Astrocyte of the cerebellum (primary cell): ENCODE measurements at regions of chr15 and their contacts with region 1.

Region 1: DNA sequence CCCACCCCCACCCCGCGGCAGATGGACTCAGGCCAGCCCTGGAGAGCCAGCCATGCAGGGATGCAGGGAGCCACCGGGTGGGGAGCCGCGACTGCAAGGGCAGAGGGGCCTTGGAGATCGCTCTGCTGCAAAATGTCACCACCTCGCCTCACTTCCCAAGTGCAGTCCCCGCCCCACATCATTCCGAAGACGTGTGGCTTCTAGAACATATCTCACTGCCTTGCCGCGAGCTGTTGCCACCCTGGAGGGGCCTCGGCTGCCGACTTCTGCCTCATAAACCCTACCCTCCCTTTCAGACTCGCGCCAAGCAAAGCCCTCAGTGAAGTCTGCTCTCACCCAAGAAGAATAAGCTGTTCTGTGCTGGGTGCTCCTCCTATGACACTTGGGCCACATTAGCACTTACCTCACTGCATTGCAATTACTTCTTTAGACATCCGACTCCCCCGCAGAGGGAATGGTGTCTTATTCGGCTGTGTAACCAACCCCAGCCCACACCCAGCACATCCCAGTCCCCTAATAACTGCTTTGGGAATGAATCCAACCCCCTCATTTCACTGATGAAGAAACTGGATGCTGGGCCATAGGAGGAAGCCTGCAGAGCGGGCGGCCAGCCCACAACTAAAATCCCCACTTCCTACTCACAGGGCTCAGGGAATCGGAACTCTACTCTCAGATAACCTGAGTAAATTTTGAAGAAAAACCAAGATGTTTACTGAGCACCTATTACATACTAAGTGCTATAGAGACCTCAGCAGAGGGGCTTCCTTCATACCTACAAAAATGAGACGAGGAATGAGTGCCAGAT is 8.6 kb downstream of the TLE3 start:
- DNase-seq: no peak
- H3K4me3 ChIP-seq: no peak overlapping the region
- CTCF ChIP-seq: no peak

Region 2: DNA sequence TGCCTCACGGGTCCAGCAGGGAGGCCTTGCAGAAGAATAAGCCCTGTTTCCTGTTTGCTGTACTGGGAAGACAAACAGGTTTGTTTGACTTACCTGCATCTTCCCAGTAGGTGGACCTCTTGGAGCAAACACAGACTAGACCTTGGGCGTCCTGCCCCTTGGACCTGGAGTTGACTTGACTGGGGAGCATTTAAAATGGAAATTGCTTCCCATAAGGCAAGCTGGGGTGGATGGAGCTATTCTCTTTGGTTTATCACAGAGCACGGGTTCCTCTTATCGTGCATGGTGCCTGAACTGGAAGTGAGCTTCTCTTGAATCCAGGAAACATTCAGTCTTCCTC is 485.0 kb before region 1 on chr15:
- in situ Hi-C with region 1: loop called (anchors 5 kb)
- DNase-seq: no peak
- H3K4me3 ChIP-seq: no peak overlapping the region
- CTCF ChIP-seq: no peak

Region 3: GRCh38 chr15:70036585-70037291 is 52.4 kb before region 1 on chr15:
- in situ Hi-C with region 1: no loop called
- DNase-seq: no peak
- H3K4me3 ChIP-seq: no peak overlapping the region
- CTCF ChIP-seq: no peak

Region 4: GRCh38 chr15:70047386-70048197 is 41.5 kb before region 1 on chr15:
- in situ Hi-C with region 1: no loop called
- DNase-seq: no peak
- H3K4me3 ChIP-seq: no peak overlapping the region
- CTCF ChIP-seq: no peak